Posterior cingulate gyrus (tissue), 11 donors: ENCODE measurements at regions of chr5 and their contacts with region 1.

Region 1: DNA sequence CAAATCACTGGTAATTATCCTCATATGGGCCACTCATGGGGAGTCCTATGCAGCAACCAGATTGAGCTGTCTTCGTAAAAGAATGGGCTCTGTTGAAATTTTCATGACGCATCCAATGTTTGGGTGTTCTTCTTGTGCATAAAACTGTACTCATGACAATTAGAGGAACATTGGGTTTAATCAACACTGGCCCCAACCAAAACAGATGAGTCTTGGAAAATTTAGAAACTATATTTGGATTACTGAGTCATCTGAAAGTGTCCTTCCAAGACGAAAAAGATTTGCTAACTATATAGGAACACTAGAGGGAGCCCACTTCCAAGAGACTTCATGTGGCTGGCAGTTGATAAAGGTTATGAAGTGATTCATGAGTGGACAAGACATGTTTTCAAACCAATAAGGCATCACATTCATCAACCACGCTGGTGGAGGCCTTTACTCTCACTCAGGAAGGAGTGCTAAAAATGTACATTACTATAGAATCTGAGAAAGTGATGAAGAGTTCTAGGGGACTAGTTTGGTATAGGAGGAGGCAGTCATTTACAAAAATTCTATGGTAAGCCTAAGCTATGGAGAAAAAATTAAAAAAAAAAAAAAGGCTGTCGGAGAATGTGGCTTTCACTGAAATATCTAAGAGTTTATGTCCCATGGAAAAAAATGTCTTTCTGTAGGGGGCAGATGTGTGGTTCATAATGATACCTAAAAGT is 313.5 kb downstream of the PRDM9 start:
- DNase-seq: no peak

Region 2: GRCh38 chr5:23727246-23727645 is 93.7 kb before region 1 on chr5:
- intact Hi-C with region 1: no loop called
- DNase-seq: no peak

Region 3: GRCh38 chr5:24103470-24104023 is 282.6 kb after region 1 on chr5:
- intact Hi-C with region 1: loop called (anchors 10 kb)
- DNase-seq: no peak